A673 (cell line): ENCODE measurements at regions of chr15 and their contacts with region 1.

Region 1: GRCh38 chr15:89760303-89761008 is 9.4 kb upstream of the MESP1 start:
- DNase-seq: peak; percentile 80
- H3K4me3 ChIP-seq: no peak overlapping the region
- H3K27ac ChIP-seq: peak overlapping the region; percentile 44
- H3K4me1 ChIP-seq: peaks cover 12% of the 10 kb centered on the region
- H3K27me3 ChIP-seq: no peaks in the 10 kb centered on the region
- CTCF ChIP-seq: peak; percentile 98

Region 2: DNA sequence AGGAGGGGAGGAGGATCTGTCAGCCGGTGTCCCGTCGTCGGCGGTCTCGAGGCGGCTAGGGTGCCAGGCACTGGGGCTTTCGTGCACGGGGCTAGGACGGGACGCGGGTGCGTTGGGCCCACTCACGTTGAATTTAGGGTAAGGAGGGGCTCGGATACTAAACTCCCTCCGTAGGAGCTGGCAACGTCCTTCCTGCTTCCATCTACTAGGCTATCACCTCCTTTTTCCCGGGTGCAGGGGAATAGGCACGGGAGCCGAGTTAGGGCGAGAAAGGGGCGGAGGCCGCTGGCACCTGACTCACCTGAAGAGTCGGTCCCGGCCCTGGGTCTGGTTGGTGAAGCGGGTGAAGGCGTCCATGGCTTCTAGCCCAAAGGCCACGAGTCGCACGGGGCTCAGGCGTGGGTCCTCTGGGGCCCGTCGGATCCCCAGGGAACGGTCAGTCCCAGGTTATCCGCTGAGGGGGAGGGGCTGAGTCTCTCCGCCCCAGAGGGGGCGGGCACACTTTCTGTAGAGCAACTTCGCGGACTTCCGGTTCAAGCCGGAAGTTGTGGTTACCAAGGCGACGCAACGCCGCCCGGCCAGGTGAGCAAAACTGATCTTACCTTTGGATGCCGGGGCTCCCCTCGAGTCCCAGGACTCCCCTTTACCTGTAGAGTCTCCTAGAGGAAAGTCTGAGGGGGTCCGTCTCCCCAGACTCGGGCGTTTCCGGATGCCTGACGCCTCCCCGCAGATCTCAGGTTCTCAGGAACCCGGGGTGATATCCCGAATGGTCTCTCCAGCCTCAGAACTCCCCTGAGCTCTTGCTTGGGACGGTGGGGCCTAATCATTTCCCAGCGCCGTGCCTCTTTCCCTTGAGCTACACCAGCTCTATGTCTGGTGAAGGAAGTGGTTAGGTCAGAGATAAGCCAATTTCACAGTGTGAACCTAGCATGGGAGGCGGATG is 69.9 kb before region 1 on chr15 and contains the starts of genes PEX11A and WDR93:
- CTCF ChIA-PET with region 1: no interaction called
- POLR2A ChIA-PET with region 1: no interaction called
- intact Hi-C with region 1: no loop called
- DNase-seq: peak; percentile 87
- H3K4me3 ChIP-seq: peak within 1 kb of the TSS; percentile 88
- H3K27ac ChIP-seq: peak within 1 kb of the TSS; percentile 56
- H3K4me1 ChIP-seq: no peaks in the 10 kb centered on the region
- H3K27me3 ChIP-seq: peaks cover 3% of the 10 kb centered on the region
- CTCF ChIP-seq: no peak
- total RNA-seq, gene PEX11A: 2.7 and 5.4 TPM in 2 replicates
- total RNA-seq, gene WDR93: not detected in 2 replicates

Region 3: DNA sequence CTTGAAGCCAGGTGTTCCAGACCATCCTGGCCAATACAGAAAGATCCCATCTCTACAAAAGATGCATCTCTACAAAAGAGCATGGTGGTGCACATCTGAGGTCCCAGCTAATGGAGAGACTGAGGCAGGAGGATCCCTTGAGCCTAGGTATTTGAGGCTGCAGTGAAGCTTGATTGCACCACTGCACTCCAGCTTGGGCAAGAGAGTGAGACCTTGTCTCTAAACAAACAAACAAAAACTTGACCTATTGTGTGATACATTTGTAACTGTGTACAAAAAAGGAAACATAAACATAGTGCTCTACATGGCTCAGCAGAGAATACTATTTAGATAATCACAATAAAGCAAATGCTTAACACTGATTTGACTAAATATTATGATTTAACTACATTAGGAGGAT is 35.5 kb after region 1 on chr15:
- CTCF ChIA-PET with region 1: interaction called, 13 read pairs
- POLR2A ChIA-PET with region 1: no interaction called
- intact Hi-C with region 1: no loop called
- DNase-seq: no peak
- H3K4me3 ChIP-seq: no peak overlapping the region
- H3K27ac ChIP-seq: no peak overlapping the region
- H3K4me1 ChIP-seq: no peaks in the 10 kb centered on the region
- H3K27me3 ChIP-seq: no peaks in the 10 kb centered on the region
- CTCF ChIP-seq: no peak

Region 4: GRCh38 chr15:89810837-89811236 is 50.4 kb after region 1 on chr15:
- CTCF ChIA-PET with region 1: interaction called, 10 read pairs
- POLR2A ChIA-PET with region 1: no interaction called
- intact Hi-C with region 1: no loop called
- DNase-seq: no peak
- H3K4me3 ChIP-seq: no peak overlapping the region
- H3K27ac ChIP-seq: no peak overlapping the region
- H3K4me1 ChIP-seq: no peaks in the 10 kb centered on the region
- H3K27me3 ChIP-seq: peaks cover 9% of the 10 kb centered on the region
- CTCF ChIP-seq: no peak

Region 5: GRCh38 chr15:89874926-89875564 is 114.6 kb after region 1 on chr15:
- CTCF ChIA-PET with region 1: interaction called, 61 read pairs
- POLR2A ChIA-PET with region 1: no interaction called
- intact Hi-C with region 1: loop called (anchors 1 kb)
- DNase-seq: peak; percentile 80
- H3K4me3 ChIP-seq: no peak overlapping the region
- H3K27ac ChIP-seq: no peak overlapping the region
- H3K4me1 ChIP-seq: no peaks in the 10 kb centered on the region
- H3K27me3 ChIP-seq: no peaks in the 10 kb centered on the region
- CTCF ChIP-seq: peak; percentile 98

Region 6: DNA sequence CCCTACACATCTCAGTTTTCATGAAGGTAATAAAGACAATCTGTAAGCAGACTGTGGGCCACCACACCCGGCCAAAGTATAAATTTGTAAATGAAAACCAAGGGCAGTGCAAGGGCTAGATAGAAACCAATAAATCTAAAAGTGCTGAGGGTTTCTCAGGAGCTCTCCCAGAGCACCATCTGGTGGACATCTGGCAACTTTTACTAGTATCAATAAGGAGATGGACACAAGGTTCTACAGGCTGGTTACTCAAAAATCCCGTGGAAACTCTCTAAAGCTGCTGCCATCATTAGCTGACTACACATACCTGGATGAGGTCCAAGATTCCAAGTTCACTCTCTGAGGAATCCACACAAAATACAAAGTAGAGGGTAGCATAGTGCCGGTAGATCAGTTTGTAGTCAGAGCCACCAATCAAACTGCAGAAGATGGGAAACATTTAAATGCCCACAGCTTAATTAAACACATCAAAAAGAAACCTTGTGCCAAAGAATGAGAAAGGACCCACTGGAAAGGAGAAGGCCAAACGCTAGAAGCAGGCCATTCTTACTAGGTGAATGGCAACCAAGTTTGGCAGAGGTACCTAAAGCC is 127.9 kb after region 1 on chr15:
- CTCF ChIA-PET with region 1: interaction called, 13 read pairs
- POLR2A ChIA-PET with region 1: no interaction called
- intact Hi-C with region 1: no loop called
- DNase-seq: peak; percentile 48
- H3K4me3 ChIP-seq: no peak overlapping the region
- H3K27ac ChIP-seq: no peak overlapping the region
- H3K4me1 ChIP-seq: no peaks in the 10 kb centered on the region
- H3K27me3 ChIP-seq: no peaks in the 10 kb centered on the region
- CTCF ChIP-seq: peak; percentile 46; the same call in 1 of the 2 replicates

Region 7: GRCh38 chr15:90086868-90087268 is 326.4 kb after region 1 on chr15:
- CTCF ChIA-PET with region 1: no interaction called
- POLR2A ChIA-PET with region 1: no interaction called
- intact Hi-C with region 1: loop called (anchors 2 kb)
- DNase-seq: peak; percentile 75
- H3K4me3 ChIP-seq: no peak overlapping the region
- H3K27ac ChIP-seq: no peak overlapping the region
- H3K4me1 ChIP-seq: no peaks in the 10 kb centered on the region
- H3K27me3 ChIP-seq: no peaks in the 10 kb centered on the region
- CTCF ChIP-seq: peak; percentile 82